IMR-90 (cell line): ENCODE measurements at regions of chr16 and their contacts with region 1.

Region 1: GRCh38 chr16:86519649-86520316 is 9.5 kb downstream of the FOXF1 start:
- DNase-seq: peak; percentile 77
- ATAC-seq: peak; percentile 42
- H3K4me3 ChIP-seq: peak overlapping the region; percentile 13; the same call in 1 of the 2 replicates
- H3K27ac ChIP-seq: peak overlapping the region; percentile 30
- H3K4me1 ChIP-seq: peaks cover 14% of the 10 kb centered on the region
- H3K27me3 ChIP-seq: no peaks in the 10 kb centered on the region
- CTCF ChIP-seq: peak; percentile 87
- POLR2A ChIP-seq: peak; percentile 23; the same call in 1 of the 2 replicates
- RAD21 ChIP-seq: peak; percentile 77

Region 2: DNA sequence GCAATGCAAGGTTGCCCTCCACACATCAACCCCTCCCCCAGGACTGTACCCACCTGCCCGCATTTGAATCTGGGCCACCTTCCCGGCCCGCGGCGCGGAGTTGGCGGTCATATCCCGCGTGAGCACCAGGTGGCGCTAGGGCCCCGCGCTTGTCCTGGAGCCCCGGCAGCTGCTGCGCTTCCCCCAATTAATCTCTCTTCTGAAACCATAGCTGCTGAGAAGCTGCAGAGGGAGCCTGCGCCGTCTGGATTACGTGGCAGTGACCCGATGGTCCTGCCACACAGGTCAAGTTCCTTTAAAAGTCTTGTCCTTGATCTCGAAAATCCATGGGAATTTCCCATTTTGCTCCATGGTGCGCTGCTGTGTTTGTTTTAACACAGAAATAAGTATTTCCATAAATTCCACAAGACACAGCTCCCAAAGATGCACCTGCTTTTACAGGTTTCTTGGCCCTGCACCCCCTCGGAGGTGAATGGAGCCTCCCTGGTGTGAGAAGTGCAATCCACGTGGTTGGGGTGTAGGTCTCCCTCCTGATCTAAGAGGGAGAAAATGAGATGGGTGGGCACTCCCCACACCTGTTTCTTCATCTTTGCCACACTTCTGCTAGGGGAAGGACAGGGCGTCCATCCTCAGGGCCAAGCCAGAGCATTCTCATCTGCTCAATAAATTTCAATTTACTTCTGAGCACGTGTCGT is 698.2 kb before region 1 on chr16:
- CTCF ChIA-PET with region 1: no interaction called
- POLR2A ChIA-PET with region 1: no interaction called
- dilution Hi-C with region 1: no loop called
- in situ Hi-C with region 1: loop called (anchors 5 kb)
- intact Hi-C with region 1: loop called (anchors 1 kb)
- DNase-seq: peak; percentile 76
- ATAC-seq: peak; percentile 91
- H3K4me3 ChIP-seq: no peak overlapping the region
- H3K27ac ChIP-seq: no peak overlapping the region
- H3K4me1 ChIP-seq: peaks cover 3% of the 10 kb centered on the region; the same call in 1 of the 2 replicates
- H3K27me3 ChIP-seq: peaks cover 28% of the 10 kb centered on the region
- CTCF ChIP-seq: peak; percentile 98
- POLR2A ChIP-seq: 0 out of 2 replicates have a peak, but pooled peaks have one; percentile 57
- RAD21 ChIP-seq: peak; percentile 99

Region 3: GRCh38 chr16:86044241-86044671 is 475.5 kb before region 1 on chr16:
- CTCF ChIA-PET with region 1: interaction called, 3 read pairs
- POLR2A ChIA-PET with region 1: no interaction called
- dilution Hi-C with region 1: no loop called
- in situ Hi-C with region 1: no loop called
- intact Hi-C with region 1: loop called (anchors 1 kb)
- DNase-seq: peak; percentile 64
- ATAC-seq: peak; percentile 91
- H3K4me3 ChIP-seq: no peak overlapping the region
- H3K27ac ChIP-seq: no peak overlapping the region
- H3K4me1 ChIP-seq: no peaks in the 10 kb centered on the region; the same call in 1 of the 2 replicates
- H3K27me3 ChIP-seq: peaks cover 64% of the 10 kb centered on the region
- CTCF ChIP-seq: peak; percentile 70
- POLR2A ChIP-seq: no peak
- RAD21 ChIP-seq: peak; percentile 73